Heart left ventricle (tissue), 16 donors: ENCODE measurements at regions of chr9 and their contacts with region 1.

Region 1: DNA sequence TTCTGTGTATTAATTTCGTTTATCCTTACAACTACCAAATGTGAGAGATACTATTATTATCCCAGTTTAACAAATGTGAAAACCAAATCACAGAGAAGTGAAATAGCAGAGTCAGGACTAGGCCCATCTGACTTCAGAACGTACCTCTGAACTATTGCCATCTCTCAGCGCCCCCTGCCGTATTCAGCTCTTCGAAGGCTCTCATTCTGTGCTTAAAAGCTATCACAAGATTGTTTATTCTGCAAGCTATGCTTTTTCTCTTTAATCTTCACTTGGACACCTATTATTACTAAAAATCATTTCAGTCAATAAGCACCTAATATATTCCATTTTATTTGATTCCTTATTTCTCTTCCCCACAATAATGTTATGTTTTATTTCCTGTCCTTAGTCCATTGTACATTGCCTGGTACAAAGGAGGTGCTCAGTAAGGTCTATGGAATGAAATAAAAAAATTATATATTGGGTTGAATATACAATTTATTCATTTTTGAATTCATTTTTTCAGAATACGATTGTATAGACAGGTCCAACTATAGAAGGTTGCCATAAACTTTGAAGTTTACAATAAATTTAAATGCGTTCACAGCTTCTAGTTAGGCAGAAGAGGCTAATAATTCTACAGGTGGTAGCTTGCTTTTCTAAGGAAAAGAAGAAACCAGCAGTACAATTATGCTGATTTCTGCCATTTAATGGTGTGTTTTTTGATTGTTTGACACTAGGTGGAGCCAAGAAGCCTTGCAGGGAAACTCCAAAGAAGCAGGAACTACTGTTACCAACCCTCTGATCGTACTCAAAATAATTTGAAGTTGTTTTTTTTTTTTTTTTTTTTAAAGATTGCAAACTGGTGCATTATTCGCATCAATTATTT is 202.2 kb upstream of the DMRTA1 start:
- DNase-seq: no peak
- ATAC-seq: peak in 1 of 4 donors; percentile 62
- H3K4me3 ChIP-seq: peak overlapping the region in 4 of 12 donors; percentile 6 to 34 (median 22)
- H3K27ac ChIP-seq: no peak overlapping the region
- H3K4me1 ChIP-seq: peaks cover 0 to 9% (median 0%) of the 10 kb centered on the region in 12 donors
- H3K27me3 ChIP-seq: no peaks in the 10 kb centered on the region
- CTCF ChIP-seq: peak in 11 of 12 donors; percentile 2 to 63 (median 41)
- POLR2A ChIP-seq: no peak

Region 2: GRCh38 chr9:22037954-22038690 is 206.3 kb before region 1 on chr9:
- intact Hi-C with region 1: loop called in 3 of 10 experiments (anchors 10 kb)
- DNase-seq: no peak
- ATAC-seq: no peak
- H3K4me3 ChIP-seq: no peak overlapping the region
- H3K27ac ChIP-seq: no peak overlapping the region
- H3K4me1 ChIP-seq: peaks cover 0 to 10% (median 0%) of the 10 kb centered on the region in 12 donors
- H3K27me3 ChIP-seq: no peaks in the 10 kb centered on the region
- CTCF ChIP-seq: peak; percentile 23 to 66 (median 51)
- POLR2A ChIP-seq: no peak

Region 3: DNA sequence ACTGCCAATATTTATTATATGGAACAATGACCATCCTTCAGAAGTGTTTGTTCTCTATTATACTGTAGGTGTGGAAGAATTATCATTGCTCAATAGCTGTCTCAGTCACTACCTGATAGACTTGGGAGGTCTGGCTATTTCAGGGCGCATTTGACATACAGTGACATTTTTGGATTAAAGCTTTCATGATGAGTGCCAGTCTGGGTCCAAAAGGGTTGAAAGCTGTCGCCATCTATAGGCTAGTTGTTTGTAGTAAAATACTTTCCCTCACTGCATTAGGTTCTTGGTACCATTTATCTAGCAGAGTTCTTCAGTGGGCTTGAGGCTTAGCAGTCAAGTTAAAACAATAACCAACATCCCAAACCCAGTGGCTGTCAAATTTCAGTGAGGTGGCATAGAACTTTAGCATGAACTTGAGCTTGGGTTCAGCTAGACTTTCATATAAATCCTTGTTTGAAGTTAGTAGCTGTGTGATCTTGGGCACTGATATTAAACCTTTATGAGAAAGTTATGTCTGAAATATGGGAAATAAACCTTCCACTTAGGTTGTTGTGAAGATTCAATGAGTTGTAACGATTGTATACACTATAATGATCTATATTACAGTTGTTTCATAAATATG is 124.7 kb before region 1 on chr9:
- intact Hi-C with region 1: loop called in 1 of 10 experiments (anchors 5 kb)
- DNase-seq: peak in 1 of 5 donors; percentile 7
- ATAC-seq: peak in 3 of 4 donors; percentile 63 to 79 (median 79)
- H3K4me3 ChIP-seq: no peak overlapping the region
- H3K27ac ChIP-seq: no peak overlapping the region
- H3K4me1 ChIP-seq: peaks cover 0 to 5% (median 0%) of the 10 kb centered on the region in 12 donors
- H3K27me3 ChIP-seq: peaks cover 0 to 3% (median 0%) of the 10 kb centered on the region in 9 donors
- CTCF ChIP-seq: peak; percentile 13 to 52 (median 31)
- POLR2A ChIP-seq: no peak

Region 4: DNA sequence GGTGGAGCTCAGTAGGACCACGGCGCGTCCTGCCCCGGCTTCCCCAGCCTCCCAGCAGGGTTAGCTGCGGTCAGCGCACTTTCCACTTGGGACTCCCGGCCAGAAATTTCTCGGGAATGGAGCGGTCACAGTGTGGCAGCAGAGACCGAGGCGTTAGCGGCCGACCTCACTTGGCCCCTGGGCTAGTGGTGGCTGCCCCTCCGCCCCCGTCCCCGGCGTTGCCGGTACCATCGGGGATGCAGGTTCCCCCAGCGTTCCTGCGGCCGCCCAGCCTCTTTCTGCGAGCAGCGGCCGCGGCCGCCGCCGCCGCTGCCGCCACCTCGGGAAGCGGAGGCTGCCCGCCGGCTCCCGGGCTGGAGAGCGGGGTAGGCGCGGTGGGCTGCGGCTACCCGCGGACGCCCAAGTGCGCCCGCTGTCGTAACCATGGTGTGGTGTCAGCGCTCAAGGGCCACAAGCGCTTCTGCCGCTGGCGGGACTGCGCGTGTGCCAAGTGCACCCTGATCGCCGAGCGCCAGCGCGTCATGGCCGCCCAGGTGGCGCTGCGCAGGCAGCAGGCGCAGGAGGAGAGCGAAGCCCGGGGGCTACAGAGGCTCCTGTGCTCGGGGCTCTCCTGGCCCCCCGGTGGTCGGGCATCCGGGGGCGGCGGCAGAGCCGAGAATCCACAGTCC is 202.7 kb after region 1 on chr9:
- intact Hi-C with region 1: loop called in 5 of 10 experiments (anchors 5 to 10 kb)
- DNase-seq: peak; percentile 35 to 75 (median 67)
- ATAC-seq: peak; percentile 72 to 92 (median 84)
- H3K4me3 ChIP-seq: peak overlapping the region; percentile 48 to 75 (median 64)
- H3K27ac ChIP-seq: peak overlapping the region; percentile 28 to 92 (median 81)
- H3K4me1 ChIP-seq: peaks cover 0 to 22% (median 0%) of the 10 kb centered on the region in 12 donors
- H3K27me3 ChIP-seq: peaks cover 0 to 36% (median 0%) of the 10 kb centered on the region in 9 donors
- CTCF ChIP-seq: peak in 5 of 12 donors; percentile 6 to 33 (median 22)
- POLR2A ChIP-seq: no peak

Region 5: GRCh38 chr9:22452415-22453010 is 208.1 kb after region 1 on chr9:
- intact Hi-C with region 1: loop called in 6 of 10 experiments (anchors 5 to 10 kb)
- DNase-seq: peak in 2 of 5 donors; percentile 29 to 51
- ATAC-seq: peak in 1 of 4 donors; percentile 53
- H3K4me3 ChIP-seq: no peak overlapping the region
- H3K27ac ChIP-seq: no peak overlapping the region
- H3K4me1 ChIP-seq: peaks cover 0 to 6% (median 0%) of the 10 kb centered on the region in 12 donors
- H3K27me3 ChIP-seq: peaks cover 0 to 17% (median 0%) of the 10 kb centered on the region in 9 donors
- CTCF ChIP-seq: peak; percentile 54 to 85 (median 76)
- POLR2A ChIP-seq: no peak